Mammary epithelial cell (primary cell): ENCODE measurements at regions of chr7 and their contacts with region 1.

Region 1: DNA sequence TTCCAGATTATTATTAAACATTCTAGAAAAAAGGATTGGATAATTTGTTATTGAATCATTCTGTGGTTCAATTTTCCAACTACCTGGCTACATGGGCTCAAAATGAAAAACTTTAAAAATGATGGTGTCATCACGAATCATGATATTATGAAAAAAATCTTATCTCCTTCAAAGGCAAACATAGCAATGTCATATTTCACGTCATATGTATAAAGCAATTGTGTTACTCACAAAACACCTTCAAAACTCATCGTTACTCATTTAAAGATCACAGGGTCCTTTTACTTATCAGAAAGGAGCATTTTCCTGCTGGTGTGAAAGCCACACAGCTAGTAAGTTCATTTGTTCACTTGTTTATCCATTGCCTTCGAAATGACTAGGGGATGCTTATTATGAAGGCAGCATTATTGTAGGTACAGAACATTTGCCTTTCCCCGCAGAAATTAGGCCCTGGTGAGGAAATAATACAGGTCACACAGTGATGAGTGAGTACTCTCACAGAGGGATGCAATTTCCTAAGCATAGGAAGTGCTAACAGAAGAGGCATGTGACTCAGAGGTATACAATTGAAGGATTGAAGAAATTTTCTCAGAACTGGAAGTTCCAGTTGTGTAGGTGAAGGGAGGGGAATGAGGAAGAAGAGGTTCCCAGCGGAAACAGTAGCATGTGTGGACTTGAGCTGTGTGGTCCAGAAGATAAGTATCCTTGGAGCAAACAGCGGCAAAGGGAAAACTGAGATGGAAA is 478.7 kb downstream of the INHBA start:
- DNase-seq: peak; percentile 98
- H3K4me3 ChIP-seq: no peak overlapping the region
- H3K27ac ChIP-seq: peak overlapping the region; percentile 93
- H3K4me1 ChIP-seq: peaks cover 32% of the 10 kb centered on the region
- H3K27me3 ChIP-seq: no peaks in the 10 kb centered on the region
- CTCF ChIP-seq: no peak

Region 2: DNA sequence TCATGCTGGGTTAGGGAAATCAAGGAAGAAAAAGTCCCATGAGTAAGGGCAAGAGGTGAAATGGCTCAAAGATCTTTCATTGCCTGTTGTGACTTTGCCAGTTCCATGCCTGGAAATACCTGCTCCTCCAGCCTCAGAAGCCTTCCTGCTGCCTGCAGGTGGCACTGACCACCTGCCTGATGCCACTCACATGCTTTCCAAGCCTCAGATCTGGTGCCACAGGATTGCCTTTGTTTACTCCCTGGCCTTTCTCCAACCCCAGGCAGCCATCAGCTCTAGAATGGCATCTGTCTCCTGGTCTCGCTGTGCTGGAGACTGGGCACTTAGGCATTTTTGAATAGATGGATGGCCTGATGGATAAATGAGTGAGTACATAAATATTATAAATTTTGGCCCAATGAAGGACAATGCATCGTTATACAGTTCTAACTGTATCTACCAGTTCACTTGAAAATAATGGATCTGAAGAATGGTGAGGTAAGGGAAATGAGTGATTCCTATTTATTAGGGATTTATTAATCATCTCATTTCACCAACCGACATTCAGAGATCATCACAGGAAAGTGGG is 178.6 kb before region 1 on chr7:
- CTCF ChIA-PET with region 1: interaction called, 5 read pairs
- dilution Hi-C with region 1: no loop called
- in situ Hi-C with region 1: no loop called
- intact Hi-C with region 1: loop called (anchors 1 kb)
- DNase-seq: peak; percentile 70
- H3K4me3 ChIP-seq: no peak overlapping the region
- H3K27ac ChIP-seq: no peak overlapping the region
- H3K4me1 ChIP-seq: peaks cover 16% of the 10 kb centered on the region
- H3K27me3 ChIP-seq: no peaks in the 10 kb centered on the region
- CTCF ChIP-seq: peak; percentile 71 to 88

Region 3: DNA sequence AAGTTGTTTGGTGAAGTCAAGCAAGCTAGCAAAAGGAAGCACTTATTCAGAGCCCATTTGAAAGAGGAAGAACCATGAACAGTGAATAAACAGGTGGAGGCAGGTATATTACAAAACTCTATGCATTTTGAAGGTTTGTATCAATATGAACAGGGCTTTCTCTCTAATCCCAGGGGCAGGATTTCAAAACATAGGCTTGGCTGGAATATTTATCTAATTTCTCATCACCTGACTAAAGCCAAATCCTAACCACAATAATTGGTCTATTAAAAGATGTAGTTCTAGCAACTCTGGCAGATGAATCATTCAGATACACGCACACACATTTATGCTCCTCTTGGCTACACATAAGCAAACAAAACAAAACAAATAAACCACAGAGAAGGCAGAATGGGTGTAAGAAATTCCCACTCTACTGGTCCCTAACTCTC is 75.7 kb before region 1 on chr7:
- CTCF ChIA-PET with region 1: no interaction called
- dilution Hi-C with region 1: no loop called
- in situ Hi-C with region 1: no loop called
- intact Hi-C with region 1: loop called (anchors 1 kb)
- DNase-seq: peak; percentile 98
- H3K4me3 ChIP-seq: no peak overlapping the region
- H3K27ac ChIP-seq: peak overlapping the region; percentile 99
- H3K4me1 ChIP-seq: peaks cover 46% of the 10 kb centered on the region
- H3K27me3 ChIP-seq: no peaks in the 10 kb centered on the region
- CTCF ChIP-seq: no peak

Region 4: DNA sequence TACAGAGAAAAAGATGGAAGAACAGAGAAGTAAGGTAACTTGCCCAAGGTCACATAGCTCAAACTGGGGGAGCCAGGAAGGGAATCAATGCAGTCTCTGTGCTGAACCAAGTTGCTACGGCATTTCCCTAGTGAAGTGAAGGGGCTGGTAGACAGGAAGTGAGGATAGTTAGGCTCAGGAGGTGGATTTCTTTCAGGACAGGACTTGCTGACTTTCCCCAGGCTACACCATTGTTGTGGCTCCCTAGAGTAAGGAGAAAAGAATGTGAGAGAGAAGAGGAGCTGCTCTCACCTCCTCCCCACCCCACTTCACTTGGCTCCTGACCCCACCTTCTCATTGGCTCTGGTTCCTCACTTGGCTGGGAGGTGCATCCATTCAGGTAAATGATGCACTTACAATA is 161.8 kb after region 1 on chr7:
- CTCF ChIA-PET with region 1: no interaction called
- dilution Hi-C with region 1: no loop called
- in situ Hi-C with region 1: no loop called
- intact Hi-C with region 1: loop called (anchors 10 kb)
- DNase-seq: peak; percentile 94
- H3K4me3 ChIP-seq: no peak overlapping the region
- H3K27ac ChIP-seq: peak overlapping the region; percentile 87
- H3K4me1 ChIP-seq: peaks cover 27% of the 10 kb centered on the region
- H3K27me3 ChIP-seq: no peaks in the 10 kb centered on the region
- CTCF ChIP-seq: no peak